MCF 10A (cell line): ENCODE measurements at regions of chr2 and their contacts with region 1.

Region 1: DNA sequence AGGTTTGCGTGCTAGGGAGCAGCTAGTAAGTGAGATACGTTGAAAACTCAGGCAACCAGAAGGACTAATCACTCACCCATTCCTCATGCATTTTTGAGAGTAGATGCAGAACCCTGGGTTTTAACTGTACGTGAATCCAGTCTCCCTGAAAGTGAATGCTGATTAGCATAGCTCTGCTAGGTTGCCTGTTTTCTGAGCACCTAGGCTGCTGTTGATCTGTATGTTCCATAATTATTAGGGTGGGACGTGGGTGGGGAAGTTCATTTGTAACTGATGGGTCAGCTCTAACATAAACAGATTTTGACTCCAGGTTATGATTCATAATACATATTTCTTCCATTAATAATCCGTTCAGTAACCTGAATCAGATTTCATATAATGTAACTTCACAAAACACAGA is 379.0 kb upstream of the FANCL start:
- DNase-seq: peak; percentile 54
- H3K4me3 Mint-ChIP-seq: peak overlapping the region; percentile 66
- H3K27ac Mint-ChIP-seq: peak overlapping the region; percentile 93
- H3K4me1 Mint-ChIP-seq: peaks cover 11% of the 10 kb centered on the region
- H3K27me3 Mint-ChIP-seq: no peaks in the 10 kb centered on the region
- CTCF ChIP-seq: no peak

Region 2: GRCh38 chr2:58261215-58261614 is 358.9 kb before region 1 on chr2:
- CTCF ChIA-PET with region 1: no interaction called
- POLR2A ChIA-PET with region 1: no interaction called
- intact Hi-C with region 1: no loop called
- DNase-seq: no peak
- H3K4me3 Mint-ChIP-seq: no peak overlapping the region
- H3K27ac Mint-ChIP-seq: no peak overlapping the region
- H3K4me1 Mint-ChIP-seq: no peaks in the 10 kb centered on the region
- H3K27me3 Mint-ChIP-seq: no peaks in the 10 kb centered on the region
- CTCF ChIP-seq: no peak

Region 3: GRCh38 chr2:58571181-58571852 is 48.8 kb before region 1 on chr2:
- CTCF ChIA-PET with region 1: interaction called, 3 read pairs
- POLR2A ChIA-PET with region 1: no interaction called
- intact Hi-C with region 1: loop called (anchors 2 kb)
- DNase-seq: peak; percentile 88
- H3K4me3 Mint-ChIP-seq: no peak overlapping the region
- H3K27ac Mint-ChIP-seq: peak overlapping the region; percentile 75
- H3K4me1 Mint-ChIP-seq: peaks cover 18% of the 10 kb centered on the region
- H3K27me3 Mint-ChIP-seq: no peaks in the 10 kb centered on the region
- CTCF ChIP-seq: peak; percentile 87

Region 4: GRCh38 chr2:58633576-58634365 is 13.7 kb after region 1 on chr2:
- CTCF ChIA-PET with region 1: interaction called, 7 read pairs
- POLR2A ChIA-PET with region 1: interaction called, 20 read pairs
- intact Hi-C with region 1: no loop called
- DNase-seq: peak; percentile 43
- H3K4me3 Mint-ChIP-seq: no peak overlapping the region
- H3K27ac Mint-ChIP-seq: peak overlapping the region; percentile 57
- H3K4me1 Mint-ChIP-seq: peaks cover 39% of the 10 kb centered on the region
- H3K27me3 Mint-ChIP-seq: no peaks in the 10 kb centered on the region
- CTCF ChIP-seq: no peak